IMR-90 (cell line): ENCODE measurements at regions of chr1 and their contacts with region 1.

Region 1: DNA sequence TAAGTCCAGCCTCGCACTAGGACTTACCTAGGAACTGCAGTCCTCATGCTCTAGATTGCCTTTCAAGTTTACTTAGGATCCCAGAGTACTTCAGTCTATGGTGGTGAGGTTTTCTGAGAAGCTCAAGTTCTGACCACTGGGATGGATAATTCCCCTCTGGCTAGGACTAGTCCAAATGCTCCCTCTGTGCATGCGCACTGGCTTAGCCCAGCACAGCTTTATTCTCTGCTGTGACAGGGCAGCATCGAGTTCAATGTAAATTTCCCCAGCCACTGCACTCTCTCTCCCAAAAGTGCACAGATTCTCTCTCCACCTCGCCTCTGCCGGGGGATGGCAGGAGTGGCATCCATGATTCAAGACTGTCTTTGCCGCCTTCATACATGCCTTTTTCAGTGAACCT is 241.6 kb downstream of the ZNF326 start:
- DNase-seq: no peak
- ATAC-seq: no peak
- H3K4me3 ChIP-seq: no peak overlapping the region
- H3K27ac ChIP-seq: no peak overlapping the region
- H3K4me1 ChIP-seq: no peaks in the 10 kb centered on the region
- H3K27me3 ChIP-seq: no peaks in the 10 kb centered on the region
- CTCF ChIP-seq: no peak
- POLR2A ChIP-seq: no peak
- RAD21 ChIP-seq: no peak

Region 2: DNA sequence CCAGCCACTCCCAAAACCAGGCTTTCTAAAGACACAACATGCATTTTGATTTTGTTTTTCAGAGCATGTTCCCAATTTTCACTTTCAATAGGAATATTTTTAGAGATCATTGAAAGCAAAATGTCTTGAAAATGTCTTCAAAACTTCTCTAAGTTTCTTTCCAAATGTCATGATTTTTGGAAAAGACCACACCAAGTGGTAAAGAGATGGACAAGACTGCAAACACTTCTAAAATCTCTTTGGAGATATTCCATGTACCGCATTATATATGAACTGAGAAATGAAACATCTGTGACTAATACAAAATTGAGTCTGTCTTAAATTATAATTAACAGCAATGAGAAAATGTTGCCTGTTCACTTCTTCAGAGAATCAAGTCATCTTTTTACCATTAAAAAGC is 1970.4 kb before region 1 on chr1:
- CTCF ChIA-PET with region 1: no interaction called
- POLR2A ChIA-PET with region 1: no interaction called
- dilution Hi-C with region 1: no loop called
- in situ Hi-C with region 1: no loop called
- intact Hi-C with region 1: no loop called
- DNase-seq: no peak
- ATAC-seq: no peak
- H3K4me3 ChIP-seq: no peak overlapping the region
- H3K27ac ChIP-seq: no peak overlapping the region
- H3K4me1 ChIP-seq: no peaks in the 10 kb centered on the region
- H3K27me3 ChIP-seq: no peaks in the 10 kb centered on the region
- CTCF ChIP-seq: no peak
- POLR2A ChIP-seq: no peak
- RAD21 ChIP-seq: no peak

Region 3: DNA sequence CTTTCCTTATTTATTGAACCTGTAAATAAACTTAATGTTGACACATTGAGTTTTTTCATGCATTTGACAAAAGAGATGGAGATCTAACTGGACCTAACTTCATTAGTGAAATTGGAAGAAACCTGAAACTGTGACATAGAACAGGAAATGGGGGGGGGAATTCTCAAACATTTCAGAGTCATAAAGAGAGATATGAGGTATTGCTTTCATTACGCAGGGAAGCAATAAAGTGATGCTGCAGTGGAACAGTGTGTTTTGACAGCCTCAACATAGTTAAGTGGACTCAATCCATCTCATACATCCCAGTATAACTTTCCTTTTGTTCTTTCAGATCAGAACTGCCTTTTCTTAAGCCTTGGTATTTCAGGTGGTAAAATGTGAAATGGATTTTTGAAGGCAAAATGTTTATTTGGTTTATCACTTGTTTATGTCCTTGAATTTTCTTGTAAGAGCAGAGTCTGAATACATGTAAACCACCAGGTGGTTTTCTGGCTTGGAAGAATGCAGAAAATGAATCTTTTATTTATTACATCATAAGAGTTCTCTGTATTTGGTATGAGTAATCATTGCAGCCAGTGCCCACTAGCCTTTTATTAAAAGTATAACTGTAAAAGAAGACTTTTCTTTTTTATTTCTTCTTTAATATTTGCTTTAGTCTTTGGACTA is 109.1 kb before region 1 on chr1:
- CTCF ChIA-PET with region 1: no interaction called
- POLR2A ChIA-PET with region 1: no interaction called
- dilution Hi-C with region 1: no loop called
- in situ Hi-C with region 1: no loop called
- intact Hi-C with region 1: no loop called
- DNase-seq: no peak
- ATAC-seq: no peak
- H3K4me3 ChIP-seq: no peak overlapping the region
- H3K27ac ChIP-seq: no peak overlapping the region
- H3K4me1 ChIP-seq: no peaks in the 10 kb centered on the region
- H3K27me3 ChIP-seq: no peaks in the 10 kb centered on the region
- CTCF ChIP-seq: no peak
- POLR2A ChIP-seq: no peak
- RAD21 ChIP-seq: no peak

Region 4: GRCh38 chr1:90291431-90292216 is 55.1 kb after region 1 on chr1:
- CTCF ChIA-PET with region 1: no interaction called
- POLR2A ChIA-PET with region 1: no interaction called
- dilution Hi-C with region 1: no loop called
- in situ Hi-C with region 1: loop called (anchors 10 kb)
- intact Hi-C with region 1: no loop called
- DNase-seq: no peak
- ATAC-seq: no peak
- H3K4me3 ChIP-seq: no peak overlapping the region
- H3K27ac ChIP-seq: no peak overlapping the region
- H3K4me1 ChIP-seq: no peaks in the 10 kb centered on the region
- H3K27me3 ChIP-seq: no peaks in the 10 kb centered on the region
- CTCF ChIP-seq: no peak
- POLR2A ChIP-seq: no peak
- RAD21 ChIP-seq: no peak

Region 5: GRCh38 chr1:90308421-90308820 is 71.9 kb after region 1 on chr1:
- CTCF ChIA-PET with region 1: no interaction called
- POLR2A ChIA-PET with region 1: no interaction called
- dilution Hi-C with region 1: no loop called
- in situ Hi-C with region 1: no loop called
- intact Hi-C with region 1: no loop called
- DNase-seq: no peak
- ATAC-seq: no peak
- H3K4me3 ChIP-seq: no peak overlapping the region
- H3K27ac ChIP-seq: no peak overlapping the region
- H3K4me1 ChIP-seq: no peaks in the 10 kb centered on the region
- H3K27me3 ChIP-seq: no peaks in the 10 kb centered on the region
- CTCF ChIP-seq: no peak
- POLR2A ChIP-seq: no peak
- RAD21 ChIP-seq: no peak